Right cardiac atrium (tissue), 5 donors: ENCODE measurements at regions of chr9 and their contacts with region 1.

Region 1: DNA sequence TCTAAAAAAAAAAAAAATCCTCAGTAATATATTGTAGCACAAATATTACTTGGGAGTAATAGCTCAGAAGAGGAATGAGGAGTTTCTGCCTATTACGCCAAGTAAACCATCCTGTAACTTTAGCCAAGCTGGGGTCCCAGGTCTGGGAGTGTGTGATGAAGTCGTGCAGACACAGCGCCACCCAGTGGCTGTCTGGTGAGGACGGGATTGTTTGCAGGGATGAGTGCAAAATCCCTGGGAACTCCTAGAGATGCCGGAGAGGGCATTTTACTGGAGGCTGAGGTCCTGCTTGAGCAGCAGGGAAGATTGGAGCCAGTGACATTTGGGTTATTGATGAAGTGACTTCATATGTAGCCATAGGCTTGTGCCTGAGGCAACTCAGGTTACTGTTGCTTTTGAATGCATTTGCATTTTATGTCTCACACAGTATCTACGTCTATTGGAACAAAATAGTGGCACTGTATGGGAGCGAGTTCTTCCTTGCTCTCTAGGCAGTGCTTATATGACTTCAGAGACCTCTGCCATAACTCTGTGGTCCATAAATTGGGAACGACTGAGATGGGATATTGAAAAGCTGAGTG is 72.8 kb downstream of the PSAT1 start:
- DNase-seq: peak; percentile 67 to 90 (median 81)
- ATAC-seq: peak; percentile 73 to 79
- H3K4me3 ChIP-seq: no peak overlapping the region
- H3K27ac ChIP-seq: no peak overlapping the region
- H3K4me1 ChIP-seq: no peaks in the 10 kb centered on the region
- H3K27me3 ChIP-seq: peaks cover 2% of the 10 kb centered on the region

Region 2: GRCh38 chr9:78261403-78262001 is 108.2 kb before region 1 on chr9:
- intact Hi-C with region 1: loop called in 3 of 4 experiments (anchors 5 to 10 kb)
- DNase-seq: no peak
- ATAC-seq: no peak
- H3K4me3 ChIP-seq: no peak overlapping the region
- H3K27ac ChIP-seq: no peak overlapping the region
- H3K4me1 ChIP-seq: no peaks in the 10 kb centered on the region
- H3K27me3 ChIP-seq: no peaks in the 10 kb centered on the region

Region 3: DNA sequence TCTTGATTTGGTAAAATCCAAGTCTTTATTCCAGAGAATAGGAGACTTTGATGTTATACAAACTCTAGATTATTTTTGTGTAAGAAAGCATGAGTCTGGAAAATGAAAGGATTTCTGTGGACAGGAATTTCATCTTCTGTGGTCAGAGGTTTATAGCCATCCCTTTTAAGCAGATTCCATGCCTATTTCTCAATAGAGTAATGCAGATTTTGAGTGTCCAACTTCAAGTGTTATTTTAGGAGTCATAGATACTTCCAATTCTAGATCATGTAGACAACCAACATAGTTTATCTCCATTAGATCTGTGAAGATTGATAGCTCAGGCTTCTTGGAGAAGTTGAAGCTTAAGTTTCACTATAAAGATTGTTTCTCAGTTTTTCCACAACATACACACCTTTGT is 306.9 kb after region 1 on chr9:
- intact Hi-C with region 1: no loop called
- DNase-seq: no peak
- ATAC-seq: no peak
- H3K4me3 ChIP-seq: no peak overlapping the region
- H3K27ac ChIP-seq: no peak overlapping the region
- H3K4me1 ChIP-seq: no peaks in the 10 kb centered on the region
- H3K27me3 ChIP-seq: no peaks in the 10 kb centered on the region